ENCODE measurements at regions of chrX and their contacts with region 1.

Region 1: DNA sequence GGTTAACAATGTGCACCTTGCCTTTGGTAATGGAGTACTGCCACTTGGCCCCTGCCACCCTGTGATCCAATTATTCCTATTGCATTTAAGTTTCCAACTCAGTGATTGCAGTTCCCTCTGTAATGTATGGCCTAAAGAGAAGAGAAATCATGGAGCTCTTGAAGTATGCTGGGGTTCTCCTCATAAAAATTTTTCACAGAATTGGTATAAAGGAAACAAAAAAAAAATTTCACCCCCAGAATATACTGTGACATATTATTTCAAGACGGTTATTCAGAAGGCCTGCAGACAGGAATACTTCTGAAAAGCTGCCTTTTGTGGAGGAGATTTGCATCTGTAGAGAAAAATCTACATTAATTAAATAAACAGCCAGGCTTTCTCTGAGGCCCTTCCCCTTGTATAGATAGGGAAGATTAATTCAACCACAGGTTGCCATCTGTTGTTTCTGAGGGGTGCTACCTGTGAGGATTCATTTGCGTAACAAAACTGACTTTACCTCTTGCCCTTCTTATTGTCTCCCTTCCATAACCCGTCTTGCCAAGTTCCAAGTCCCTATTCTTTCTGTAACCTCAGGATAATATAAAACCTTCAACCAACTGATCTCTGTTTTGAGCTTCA is 94.8 kb upstream of the LANCL3 start:
- DNase-seq: no peak
- ATAC-seq: no peak
- H3K4me3 ChIP-seq: no peak overlapping the region
- H3K27ac ChIP-seq: no peak overlapping the region
- H3K4me1 ChIP-seq: no peaks in the 10 kb centered on the region
- H3K27me3 ChIP-seq: no peaks in the 10 kb centered on the region; a peak in 1 of 4 replicates
- CTCF ChIP-seq: no peak
- EP300 ChIP-seq: no peak
- POLR2A ChIP-seq: no peak
- RAD21 ChIP-seq: no peak

Region 2: DNA sequence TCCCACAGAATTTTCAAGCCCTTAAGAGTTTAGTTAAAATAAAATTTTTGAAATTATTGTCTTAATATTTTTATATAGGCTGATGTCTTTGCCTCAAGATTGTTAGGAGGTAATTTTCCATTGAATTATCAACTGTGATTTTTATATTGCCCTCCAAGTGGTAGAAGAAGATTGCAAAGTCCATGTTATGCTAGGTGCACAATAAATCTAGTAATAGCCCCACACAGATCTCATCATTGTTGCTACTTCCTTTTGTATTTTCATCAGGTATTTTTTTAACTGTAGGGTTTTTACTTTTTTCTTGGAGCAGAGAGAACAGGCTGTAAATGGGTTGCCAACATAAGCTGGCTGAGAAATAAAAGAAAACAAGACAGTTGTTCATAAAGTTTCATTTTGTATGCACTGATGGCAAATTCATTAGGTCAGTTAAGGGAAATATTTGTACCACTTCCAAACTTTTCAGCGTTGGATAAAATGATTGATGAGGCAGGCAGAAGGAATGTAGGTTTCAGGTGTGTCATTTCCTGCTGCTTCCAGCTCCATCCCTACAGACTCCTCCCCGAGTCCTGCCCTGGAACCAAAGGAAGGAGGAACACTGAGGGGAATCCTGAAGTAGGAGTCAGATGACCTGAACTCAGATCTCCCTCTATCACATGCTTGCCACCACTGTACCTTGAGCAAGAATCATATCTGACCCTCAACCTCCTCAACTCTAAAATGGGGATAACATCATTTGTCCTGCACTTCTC is 22.0 kb before region 1 on chrX:
- CTCF ChIA-PET with region 1: no interaction called
- POLR2A ChIA-PET with region 1: no interaction called
- RAD21 ChIA-PET with region 1: no interaction called
- SMC1A ChIA-PET with region 1: no interaction called
- in situ Hi-C with region 1: no loop called
- intact Hi-C with region 1: no loop called
- DNase-seq: no peak
- ATAC-seq: no peak
- H3K4me3 ChIP-seq: no peak overlapping the region
- H3K27ac ChIP-seq: no peak overlapping the region
- H3K4me1 ChIP-seq: no peaks in the 10 kb centered on the region
- H3K27me3 ChIP-seq: no peaks in the 10 kb centered on the region
- CTCF ChIP-seq: no peak
- EP300 ChIP-seq: no peak
- POLR2A ChIP-seq: no peak
- RAD21 ChIP-seq: no peak

Region 3: DNA sequence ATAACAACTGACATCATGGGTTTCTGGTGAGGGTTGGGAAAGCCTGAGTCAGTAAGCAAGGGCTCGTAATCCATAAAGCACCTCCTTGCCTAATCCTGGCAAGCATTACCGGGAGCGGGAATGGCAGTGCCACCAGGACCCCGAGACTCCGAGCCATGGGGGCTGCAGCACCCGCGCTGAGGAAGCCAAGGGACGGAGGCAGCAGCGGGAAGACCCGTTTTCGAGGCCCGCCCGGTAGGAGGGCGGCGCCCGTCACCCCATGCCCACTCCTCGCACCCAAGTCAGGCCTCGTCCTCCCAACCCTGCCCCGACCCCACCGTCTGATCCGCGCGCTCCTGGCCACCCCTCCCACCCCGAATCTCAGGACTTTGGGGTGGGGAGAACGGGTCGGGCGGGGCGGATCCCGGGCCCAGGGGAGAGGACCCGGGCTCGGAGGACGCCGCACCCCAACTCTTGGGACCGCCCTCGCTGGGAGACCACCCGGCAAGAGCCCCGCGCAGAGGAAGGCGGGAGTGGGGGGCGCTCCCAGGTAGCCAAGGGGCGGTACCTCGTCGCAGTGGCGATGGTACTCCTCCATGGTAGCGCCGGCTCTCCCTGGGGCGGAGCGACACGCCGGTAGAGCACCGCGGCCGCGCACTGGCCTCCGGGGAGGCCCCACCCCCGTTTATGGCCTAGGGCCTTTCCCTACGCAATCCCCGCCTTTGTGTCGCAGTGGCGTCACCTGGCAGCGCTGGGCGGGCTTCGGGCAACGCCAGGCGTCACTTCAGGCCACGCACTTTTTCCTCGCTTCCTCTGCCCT is 370.5 kb after region 1 on chrX and contains the start of gene DYNLT3:
- CTCF ChIA-PET with region 1: no interaction called
- POLR2A ChIA-PET with region 1: no interaction called
- RAD21 ChIA-PET with region 1: no interaction called
- SMC1A ChIA-PET with region 1: no interaction called
- in situ Hi-C with region 1: loop called (anchors 25 kb)
- intact Hi-C with region 1: no loop called
- DNase-seq: peak; percentile 39
- ATAC-seq: peak; percentile 99
- H3K4me3 ChIP-seq: peak within 1 kb of the TSS; percentile 81
- H3K27ac ChIP-seq: peak within 1 kb of the TSS; percentile 46; the same call in 1 of the 2 replicates
- H3K4me1 ChIP-seq: no peaks in the 10 kb centered on the region
- H3K27me3 ChIP-seq: no peaks in the 10 kb centered on the region
- CTCF ChIP-seq: no peak
- EP300 ChIP-seq: no peak
- POLR2A ChIP-seq: peak; percentile 66
- RAD21 ChIP-seq: no peak
- polyA plus RNA-seq, gene DYNLT3: 14.9 to 19.2 TPM

Region 4: DNA sequence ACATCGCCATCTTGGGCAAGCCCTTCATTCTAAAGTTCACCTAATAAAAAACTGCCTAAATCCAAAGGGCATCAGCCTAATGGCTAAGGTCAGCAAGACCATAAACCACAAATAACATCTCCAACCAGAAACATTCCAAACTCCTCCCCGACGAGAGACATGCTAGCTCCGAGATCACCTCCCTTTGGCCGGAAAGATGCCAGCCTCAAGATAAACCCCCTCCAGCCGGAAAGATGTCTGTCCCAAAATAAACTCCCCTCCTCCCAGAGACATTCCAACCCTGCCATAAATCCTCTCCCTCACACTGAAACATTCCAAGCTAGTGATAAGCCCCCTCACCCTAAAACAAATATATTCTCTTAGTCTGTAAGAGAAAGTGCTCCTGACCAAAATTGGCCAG is 384.0 kb after region 1 on chrX:
- CTCF ChIA-PET with region 1: no interaction called
- POLR2A ChIA-PET with region 1: no interaction called
- RAD21 ChIA-PET with region 1: no interaction called
- SMC1A ChIA-PET with region 1: no interaction called
- in situ Hi-C with region 1: no loop called
- intact Hi-C with region 1: no loop called
- DNase-seq: no peak
- ATAC-seq: no peak
- H3K4me3 ChIP-seq: no peak overlapping the region
- H3K27ac ChIP-seq: no peak overlapping the region
- H3K4me1 ChIP-seq: no peaks in the 10 kb centered on the region
- H3K27me3 ChIP-seq: no peaks in the 10 kb centered on the region
- CTCF ChIP-seq: no peak
- EP300 ChIP-seq: no peak
- POLR2A ChIP-seq: no peak
- RAD21 ChIP-seq: no peak

Measured in GM12878 (cell line).